ENCODE measurements at regions of chr10 and their contacts with region 1.

Region 1: DNA sequence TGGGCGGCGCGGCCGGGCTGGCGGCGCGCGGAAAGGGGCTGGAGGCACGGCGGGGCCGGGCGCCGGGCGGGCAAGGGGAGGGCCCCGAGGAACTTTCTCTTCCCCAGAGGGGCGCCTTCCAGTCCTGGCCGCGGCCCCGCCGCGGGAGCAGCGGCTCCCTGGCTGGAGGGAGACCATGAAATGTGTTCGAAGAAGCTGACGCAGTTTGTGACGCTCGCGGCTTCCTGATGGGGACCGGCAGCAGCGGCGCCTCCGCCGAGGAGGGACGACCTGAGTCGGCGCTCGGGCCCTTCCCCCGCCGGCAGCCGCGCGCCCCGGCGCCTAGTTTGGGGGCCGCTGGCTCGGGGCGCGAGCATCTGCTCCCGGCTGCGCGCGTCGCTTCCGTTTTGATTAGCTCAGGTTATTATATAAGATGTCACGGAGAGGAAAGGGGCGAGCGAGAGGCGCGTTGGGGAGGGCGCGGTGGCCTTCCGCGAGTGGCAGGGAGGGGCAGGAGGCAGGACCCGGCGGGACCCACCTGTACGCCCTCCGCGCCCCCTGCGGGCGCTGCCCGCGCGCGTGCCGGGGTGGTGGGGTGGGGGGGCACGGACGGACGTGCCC is 57.1 kb upstream of the PCGF5 start:
- H3K4me3 Mint-ChIP-seq: peak overlapping the region; percentile 97
- H3K27ac Mint-ChIP-seq: peak overlapping the region; percentile 74
- H3K4me1 Mint-ChIP-seq: peaks cover 11% of the 10 kb centered on the region
- H3K27me3 Mint-ChIP-seq: peaks cover 40% of the 10 kb centered on the region

Region 2: GRCh38 chr10:91201213-91201996 is 38.0 kb after region 1 on chr10:
- intact Hi-C with region 1: loop called (anchors 5 kb)
- H3K4me3 Mint-ChIP-seq: no peak overlapping the region
- H3K27ac Mint-ChIP-seq: no peak overlapping the region
- H3K4me1 Mint-ChIP-seq: peaks cover 34% of the 10 kb centered on the region
- H3K27me3 Mint-ChIP-seq: no peaks in the 10 kb centered on the region

Region 3: DNA sequence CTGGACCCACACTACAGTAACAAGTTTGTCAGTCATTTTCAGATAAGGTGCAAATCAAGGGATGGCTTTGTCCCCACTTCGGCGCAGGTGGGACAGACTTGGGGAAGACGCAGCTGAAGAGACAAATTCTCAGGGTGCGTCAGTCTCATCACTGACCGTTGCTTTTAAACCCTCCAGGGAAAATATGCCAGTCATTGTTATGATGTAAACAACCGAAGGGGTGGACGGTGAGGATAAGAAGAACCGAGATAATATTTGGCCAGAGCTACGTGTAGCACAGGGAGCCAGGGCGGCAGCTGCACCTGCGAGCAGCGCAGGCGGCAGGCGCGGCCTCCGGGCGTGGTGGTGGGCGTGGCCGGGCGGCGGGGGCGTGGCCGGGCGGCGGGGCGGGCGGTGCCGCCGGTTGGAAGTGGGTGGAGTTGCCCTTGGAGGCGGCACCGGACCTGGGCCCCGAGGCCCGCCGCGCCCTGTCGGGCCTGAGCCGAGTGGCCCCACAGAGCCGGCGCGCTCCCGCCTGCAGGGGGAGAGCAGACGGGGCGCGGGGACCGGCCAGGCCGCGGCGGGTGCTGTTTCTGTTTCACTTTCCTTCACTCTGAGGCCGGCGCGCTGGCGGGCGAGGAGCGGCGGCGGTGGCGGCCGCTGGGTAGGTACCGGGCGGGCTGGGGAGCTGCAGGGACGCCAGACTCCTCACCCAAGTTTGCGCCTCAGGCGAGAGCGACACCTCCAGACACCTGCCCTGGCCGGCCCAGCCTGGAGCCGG is 57.0 kb after region 1 on chr10 and contains the start of gene PCGF5:
- intact Hi-C with region 1: loop called (anchors 2 kb)
- H3K4me3 Mint-ChIP-seq: peak within 1 kb of the TSS; percentile 83
- H3K27ac Mint-ChIP-seq: peak within 1 kb of the TSS; percentile 85
- H3K4me1 Mint-ChIP-seq: peaks cover 49% of the 10 kb centered on the region
- H3K27me3 Mint-ChIP-seq: peaks cover 3% of the 10 kb centered on the region

Region 4: GRCh38 chr10:91444211-91445182 is 281.1 kb after region 1 on chr10:
- intact Hi-C with region 1: no loop called
- H3K4me3 Mint-ChIP-seq: no peak overlapping the region
- H3K27ac Mint-ChIP-seq: no peak overlapping the region
- H3K4me1 Mint-ChIP-seq: peaks cover 5% of the 10 kb centered on the region
- H3K27me3 Mint-ChIP-seq: no peaks in the 10 kb centered on the region

Measured in dendritic cell treated with granulocyte-macrophage colony-stimulating factor and Interleukin-4, amounts not matched to agents 40 ng/mL and 50 ng/mL, for 4 days (primary cell).